ENCODE measurements at regions of chr15 and their contacts with region 1.

Region 1: DNA sequence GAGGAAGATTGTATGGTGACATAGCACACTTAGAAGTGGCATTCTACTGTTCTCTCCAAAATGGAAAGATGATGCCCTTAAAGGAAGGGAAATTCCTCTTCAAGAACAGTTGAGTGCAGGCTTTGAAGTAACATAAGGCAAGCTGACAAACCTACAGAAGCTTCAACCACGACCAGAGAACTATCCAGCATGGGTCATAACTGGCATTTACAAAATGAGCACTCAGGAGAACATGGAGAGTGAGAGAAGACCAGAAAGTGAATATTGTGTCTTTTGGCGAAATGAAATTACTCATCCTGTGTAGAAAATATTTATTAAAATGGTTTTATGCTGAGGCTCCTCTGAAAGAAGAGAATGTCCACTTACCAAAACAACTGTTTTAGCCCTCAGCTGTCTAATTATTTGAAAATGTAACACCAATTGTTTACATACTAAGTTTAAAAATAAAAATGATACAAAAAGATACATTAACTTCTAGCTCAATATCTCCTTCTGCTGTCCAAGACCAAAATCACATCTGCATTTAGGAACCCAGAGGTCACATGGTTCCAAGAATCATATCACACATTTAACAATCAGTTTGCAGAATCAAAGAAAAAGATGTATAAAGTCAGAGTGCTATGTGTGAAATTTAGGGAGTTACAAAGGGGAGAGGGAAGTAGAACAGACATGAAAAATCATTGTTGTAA is 216.9 kb downstream of the ATP8B4 start:
- DNase-seq: no peak
- H3K4me3 ChIP-seq: no peak overlapping the region
- H3K27ac ChIP-seq: peak overlapping the region; percentile 26 to 28
- H3K4me1 ChIP-seq: no peaks in the 10 kb centered on the region
- H3K27me3 ChIP-seq: peaks cover 2% of the 10 kb centered on the region
- CTCF ChIP-seq: peak in 1 of 4 experiments; percentile 21
- POLR2A ChIP-seq: no peak

Region 2: GRCh38 chr15:49421991-49422390 is 480.1 kb before region 1 on chr15:
- intact Hi-C with region 1: loop called (anchors 5 kb)
- DNase-seq: no peak
- H3K4me3 ChIP-seq: no peak overlapping the region
- H3K27ac ChIP-seq: no peak overlapping the region
- H3K4me1 ChIP-seq: no peaks in the 10 kb centered on the region
- H3K27me3 ChIP-seq: no peaks in the 10 kb centered on the region
- CTCF ChIP-seq: peak; percentile 44 to 89 (median 61)
- POLR2A ChIP-seq: no peak

Region 3: GRCh38 chr15:49620658-49621368 is 281.3 kb before region 1 on chr15 and contains the starts of genes DTWD1 and FAM227B:
- intact Hi-C with region 1: loop called (anchors 5 kb)
- DNase-seq: peak; percentile 95
- H3K4me3 ChIP-seq: peak within 1 kb of the TSS; percentile 62 to 63
- H3K27ac ChIP-seq: peak within 1 kb of the TSS; percentile 86 to 87
- H3K4me1 ChIP-seq: no peaks in the 10 kb centered on the region
- H3K27me3 ChIP-seq: no peaks in the 10 kb centered on the region
- CTCF ChIP-seq: peak in 2 of 4 experiments; percentile 11 to 17
- POLR2A ChIP-seq: peak; percentile 72
- total RNA-seq, gene DTWD1: 16.6 to 21.1 TPM
- total RNA-seq, gene FAM227B: 8.3 to 12.9 TPM

Region 4: GRCh38 chr15:49989498-49989897 is 87.4 kb after region 1 on chr15:
- intact Hi-C with region 1: loop called (anchors 5 kb)
- DNase-seq: no peak
- H3K4me3 ChIP-seq: no peak overlapping the region
- H3K27ac ChIP-seq: peak overlapping the region in 1 of 2 donors; percentile 16
- H3K4me1 ChIP-seq: no peaks in the 10 kb centered on the region
- H3K27me3 ChIP-seq: no peaks in the 10 kb centered on the region
- CTCF ChIP-seq: no peak
- POLR2A ChIP-seq: no peak

Region 5: DNA sequence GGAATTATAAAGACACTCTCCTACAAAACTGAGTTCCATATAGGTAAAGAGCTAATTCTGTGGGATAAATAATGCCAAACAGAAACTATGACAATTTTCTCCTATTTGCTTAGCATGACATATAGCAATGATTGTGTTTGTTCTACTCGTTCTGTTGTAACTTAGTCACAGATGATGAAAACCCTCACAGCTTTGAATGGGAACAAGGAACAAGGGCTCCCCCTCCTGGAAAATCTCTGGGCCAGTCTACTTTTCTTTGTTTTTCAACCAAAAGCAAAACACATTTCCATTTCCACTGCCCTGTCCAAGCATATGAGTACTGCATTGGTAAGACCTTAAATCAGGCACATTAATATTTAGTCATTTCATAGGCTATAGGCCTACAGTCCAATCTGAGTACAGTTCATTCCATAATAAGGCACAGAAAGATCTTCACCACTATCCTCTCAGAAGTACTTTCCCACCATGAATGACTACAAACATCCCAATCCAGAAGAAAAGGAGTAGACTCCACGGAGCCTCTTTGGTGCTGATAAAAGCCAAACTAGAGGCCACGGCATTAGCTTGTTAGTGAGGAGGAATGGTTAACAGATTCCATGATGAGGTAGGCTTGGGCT is 149.8 kb after region 1 on chr15:
- intact Hi-C with region 1: loop called (anchors 5 kb)
- DNase-seq: peak; percentile 32
- H3K4me3 ChIP-seq: no peak overlapping the region
- H3K27ac ChIP-seq: no peak overlapping the region
- H3K4me1 ChIP-seq: no peaks in the 10 kb centered on the region
- H3K27me3 ChIP-seq: no peaks in the 10 kb centered on the region
- CTCF ChIP-seq: peak; percentile 36 to 71 (median 52)
- POLR2A ChIP-seq: no peak